HEK293 (cell line): ENCODE measurements at regions of chr1 and their contacts with region 1.

Region 1: GRCh38 chr1:202034683-202035462 is 24.5 kb downstream of the ELF3 start:
- H3K4me3 ChIP-seq: no peak overlapping the region
- H3K27ac ChIP-seq: peak overlapping the region; percentile 81
- H3K4me1 ChIP-seq: peaks cover 4% of the 10 kb centered on the region; the same call in 1 of the 2 replicates
- CTCF ChIP-seq: no peak

Region 2: DNA sequence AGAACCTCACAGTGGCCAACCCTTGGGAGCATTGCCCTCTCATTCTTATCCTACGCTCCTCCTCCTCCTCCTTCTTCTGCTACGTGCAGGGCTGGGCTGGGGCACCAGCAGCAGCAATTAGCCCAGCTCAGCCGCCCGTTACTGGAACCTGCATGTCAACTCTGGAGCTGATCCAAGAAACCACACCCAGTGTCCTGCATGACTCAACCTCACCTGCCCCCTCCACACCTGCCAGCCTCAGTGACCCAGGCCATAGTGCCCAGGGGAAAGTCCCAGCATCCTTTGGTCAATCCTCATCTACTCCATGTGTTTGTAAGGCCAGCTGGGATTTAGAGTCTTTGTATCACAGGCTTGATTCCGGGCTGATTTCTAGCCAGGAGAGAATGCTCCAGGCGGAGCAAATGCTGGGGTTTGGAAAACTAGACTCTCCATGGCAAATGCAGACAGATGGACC is 11.8 kb before region 1 on chr1:
- CTCF ChIA-PET with region 1: interaction called, 5 read pairs
- POLR2A ChIA-PET with region 1: interaction called, 15 read pairs
- H3K4me3 ChIP-seq: no peak overlapping the region
- H3K27ac ChIP-seq: no peak overlapping the region
- H3K4me1 ChIP-seq: peaks cover 14% of the 10 kb centered on the region
- CTCF ChIP-seq: no peak

Region 3: GRCh38 chr1:202105539-202106276 is 70.8 kb after region 1 on chr1:
- CTCF ChIA-PET with region 1: interaction called, 3 read pairs
- POLR2A ChIA-PET with region 1: interaction called, 11 read pairs
- H3K4me3 ChIP-seq: no peak overlapping the region
- H3K27ac ChIP-seq: no peak overlapping the region; the same call in 1 of the 2 replicates
- H3K4me1 ChIP-seq: peaks cover 9% of the 10 kb centered on the region
- CTCF ChIP-seq: no peak